ENCODE measurements at regions of chr12 and their contacts with region 1.

Region 1: DNA sequence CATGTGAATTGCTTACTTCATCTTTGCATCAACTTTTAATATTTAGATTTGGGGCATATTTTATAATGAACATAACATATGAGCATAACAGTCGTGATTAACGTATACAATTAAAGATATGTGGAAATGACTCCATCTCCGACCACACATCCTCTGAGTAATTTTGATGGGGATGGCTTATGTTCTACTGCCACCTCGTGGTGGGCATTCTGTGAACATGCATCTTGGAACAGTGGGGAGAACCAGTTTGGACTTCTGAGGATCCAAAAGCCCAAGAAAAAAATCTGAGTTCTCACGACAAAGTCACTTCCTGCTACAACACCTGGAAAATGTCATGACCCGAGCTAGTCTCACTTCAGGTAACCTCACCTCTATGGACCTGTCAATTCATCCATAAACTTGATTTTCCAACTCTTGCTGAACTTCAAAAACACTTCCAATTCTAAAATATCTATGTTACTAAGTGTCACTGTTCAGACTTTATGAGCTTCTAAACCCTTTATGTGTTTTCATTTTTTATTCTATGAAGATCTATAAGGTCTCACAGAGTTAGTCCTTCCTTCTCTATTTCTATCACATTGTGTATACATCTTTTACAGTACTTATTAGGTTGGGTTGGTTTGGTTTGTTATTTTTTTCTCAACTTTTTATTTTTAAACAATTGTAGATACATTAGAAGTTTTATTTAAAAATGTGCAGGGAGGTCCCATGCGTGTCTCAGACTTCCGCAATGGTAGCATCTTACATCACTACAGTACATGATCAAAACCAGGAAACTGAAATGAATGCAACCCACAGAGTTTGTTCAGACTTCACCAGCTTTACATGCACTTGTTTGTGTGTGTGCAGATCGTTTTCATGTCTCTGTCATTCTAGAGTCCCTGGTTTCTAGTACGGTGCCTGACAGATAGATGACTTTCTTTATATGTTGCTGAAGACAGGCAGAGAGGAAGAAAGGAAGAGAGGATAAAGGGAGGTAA is 38.2 kb upstream of the STAB2 start:
- DNase-seq: peak; percentile 53
- ATAC-seq: peak; percentile 75
- H3K4me3 ChIP-seq: no peak overlapping the region
- H3K27ac ChIP-seq: no peak overlapping the region
- H3K4me1 ChIP-seq: no peaks in the 10 kb centered on the region
- H3K27me3 ChIP-seq: no peaks in the 10 kb centered on the region; a peak in 1 of 5 replicates
- CTCF ChIP-seq: peak; percentile 86
- EP300 ChIP-seq: no peak
- POLR2A ChIP-seq: no peak
- RAD21 ChIP-seq: peak; percentile 65; the same call in 1 of the 2 replicates

Region 2: DNA sequence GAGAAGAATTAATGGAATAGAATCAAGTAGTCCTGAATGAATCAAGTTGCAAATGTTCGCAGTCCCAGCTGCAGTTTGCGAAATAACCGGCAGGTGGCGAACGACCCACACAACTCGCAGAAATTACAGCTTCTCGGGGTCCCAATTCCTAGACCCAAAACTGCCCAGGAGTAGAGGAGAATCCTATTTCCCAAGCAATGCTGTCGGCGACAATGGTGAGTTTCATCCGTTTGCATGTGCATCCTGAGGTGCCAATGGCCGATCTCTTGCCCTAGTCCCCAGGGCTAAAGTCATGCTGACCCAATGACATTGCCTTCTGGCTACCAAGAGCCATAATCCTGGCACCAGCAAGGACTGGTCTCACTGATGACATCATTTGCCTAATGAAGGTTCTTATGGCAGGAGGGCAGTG is 600.0 kb before region 1 on chr12:
- CTCF ChIA-PET with region 1: interaction called, 31 read pairs
- POLR2A ChIA-PET with region 1: no interaction called
- in situ Hi-C with region 1: loop called (anchors 5 kb)
- intact Hi-C with region 1: loop called (anchors 1 kb)
- DNase-seq: peak; percentile 10
- ATAC-seq: no peak
- H3K4me3 ChIP-seq: no peak overlapping the region; a peak in 1 of 6 replicates
- H3K27ac ChIP-seq: no peak overlapping the region
- H3K4me1 ChIP-seq: peaks cover 20% of the 10 kb centered on the region
- H3K27me3 ChIP-seq: peaks cover 0 to 4% of the 10 kb centered on the region in 2 experiments; a peak in 1 of 5 replicates
- CTCF ChIP-seq: peak; percentile 85
- EP300 ChIP-seq: no peak
- POLR2A ChIP-seq: no peak
- RAD21 ChIP-seq: peak; percentile 69

Region 3: DNA sequence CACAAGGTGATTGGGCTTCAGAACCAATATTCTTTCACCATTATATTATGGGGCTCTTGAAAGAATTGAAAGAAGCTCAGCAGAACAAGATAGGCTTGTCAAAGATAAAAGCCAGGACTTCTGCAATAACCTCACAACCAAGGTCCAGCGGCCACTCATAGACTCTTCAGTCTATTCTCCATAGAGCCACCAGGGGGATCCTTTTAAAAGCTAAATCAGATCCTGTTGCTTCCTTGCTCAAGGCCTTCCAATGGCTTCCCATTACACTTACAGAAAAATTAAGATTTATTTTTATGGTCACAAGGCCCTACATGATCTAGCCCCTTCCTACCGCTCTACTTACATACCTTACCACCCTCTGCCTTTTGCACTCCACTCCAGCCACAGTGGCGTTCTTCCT is 222.7 kb before region 1 on chr12:
- CTCF ChIA-PET with region 1: interaction called, 9 read pairs
- POLR2A ChIA-PET with region 1: no interaction called
- in situ Hi-C with region 1: loop called (anchors 10 kb)
- intact Hi-C with region 1: no loop called
- DNase-seq: peak; percentile 20
- ATAC-seq: peak; percentile 71
- H3K4me3 ChIP-seq: no peak overlapping the region
- H3K27ac ChIP-seq: no peak overlapping the region
- H3K4me1 ChIP-seq: no peaks in the 10 kb centered on the region
- H3K27me3 ChIP-seq: no peaks in the 10 kb centered on the region
- CTCF ChIP-seq: peak; percentile 33
- EP300 ChIP-seq: no peak
- POLR2A ChIP-seq: no peak
- RAD21 ChIP-seq: no peak

Region 4: DNA sequence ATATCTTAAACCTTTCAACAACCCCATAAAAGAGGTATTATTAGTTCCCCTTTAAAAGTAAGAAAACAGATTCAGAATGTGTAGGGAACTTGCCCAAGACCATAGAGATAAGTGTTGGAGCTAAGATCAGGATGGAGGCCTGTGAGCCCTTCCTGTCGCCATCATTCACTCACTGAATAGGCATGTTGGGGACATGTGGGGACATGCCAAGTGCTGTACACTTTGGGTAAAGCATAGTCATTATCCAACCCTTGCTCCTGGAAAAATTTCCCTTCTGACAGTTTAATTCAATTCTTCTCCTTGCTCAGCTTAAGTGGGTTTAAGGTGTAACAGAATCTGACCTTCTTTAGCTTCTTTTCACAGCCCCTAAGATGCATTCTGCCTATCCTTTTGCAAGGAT is 25.1 kb before region 1 on chr12:
- CTCF ChIA-PET with region 1: no interaction called
- POLR2A ChIA-PET with region 1: no interaction called
- in situ Hi-C with region 1: no loop called
- intact Hi-C with region 1: no loop called
- DNase-seq: no peak
- ATAC-seq: no peak
- H3K4me3 ChIP-seq: no peak overlapping the region
- H3K27ac ChIP-seq: no peak overlapping the region
- H3K4me1 ChIP-seq: no peaks in the 10 kb centered on the region
- H3K27me3 ChIP-seq: no peaks in the 10 kb centered on the region
- CTCF ChIP-seq: no peak
- EP300 ChIP-seq: no peak
- POLR2A ChIP-seq: no peak
- RAD21 ChIP-seq: no peak

Measured in HepG2 (cell line).